ENCODE measurements at regions of chr12 and their contacts with region 1.

Region 1: DNA sequence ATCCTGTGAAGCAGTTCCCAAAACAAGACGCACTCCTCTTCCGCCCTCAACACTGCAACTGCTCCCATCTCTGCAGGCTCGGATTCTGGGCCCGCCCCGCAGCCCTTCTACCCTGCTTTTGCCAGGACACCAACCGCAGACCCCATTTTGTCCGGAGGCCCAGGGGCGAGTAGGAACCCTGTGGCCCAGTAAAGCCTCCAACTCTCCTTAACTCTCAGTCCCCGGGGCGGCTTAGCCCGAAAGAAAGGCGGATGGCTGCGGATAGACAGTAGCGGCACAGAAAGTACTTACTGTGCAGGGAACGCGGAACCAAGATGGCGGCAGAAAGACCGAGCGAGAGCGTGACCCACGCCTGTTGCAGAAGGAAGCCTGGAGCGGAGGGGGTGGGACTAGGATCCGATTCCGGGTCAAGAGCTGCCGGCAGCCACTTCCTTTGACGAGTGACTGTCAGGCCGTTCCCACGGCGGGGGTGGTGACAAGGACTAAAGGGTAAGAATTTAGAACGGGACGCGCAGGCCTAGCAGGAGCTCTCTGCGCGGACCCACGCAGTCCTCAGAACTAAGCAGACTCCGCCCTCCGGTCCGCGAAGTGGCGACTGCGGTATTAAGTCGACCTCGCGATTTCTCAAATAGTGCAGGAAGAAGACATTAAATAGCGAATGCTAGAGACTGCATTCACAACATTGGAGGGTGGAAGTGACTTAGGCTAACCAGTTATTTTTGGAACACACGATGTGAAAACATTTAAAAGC is at the start of gene NACA:
- DNase-seq: peak; percentile 96 to 97
- H3K4me3 ChIP-seq: peak within 1 kb of the TSS; percentile 61 to 78
- H3K27ac ChIP-seq: peak within 1 kb of the TSS; percentile 88 to 93
- H3K4me1 ChIP-seq: peaks cover 9 to 14% of the 10 kb centered on the region in 2 donors
- H3K27me3 ChIP-seq: no peaks in the 10 kb centered on the region
- CTCF ChIP-seq: peak in 1 of 4 experiments; percentile 33
- POLR2A ChIP-seq: peak; percentile 94
- total RNA-seq, gene NACA: 942 to 2,684 (median 1,304) TPM

Region 2: GRCh38 chr12:56636675-56637540 is 88.2 kb before region 1 on chr12:
- intact Hi-C with region 1: loop called (anchors 10 kb)
- DNase-seq: peak; percentile 100
- H3K4me3 ChIP-seq: peak overlapping the region; percentile 70 to 73
- H3K27ac ChIP-seq: peak overlapping the region; percentile 90 to 100
- H3K4me1 ChIP-seq: peaks cover 4 to 19% of the 10 kb centered on the region in 2 donors
- H3K27me3 ChIP-seq: no peaks in the 10 kb centered on the region
- CTCF ChIP-seq: peak; percentile 54 to 63 (median 60)
- POLR2A ChIP-seq: peak; percentile 14 to 98

Region 3: GRCh38 chr12:56688129-56688845 is 36.9 kb before region 1 on chr12 and contains the start of gene PTGES3:
- intact Hi-C with region 1: loop called (anchors 5 kb)
- DNase-seq: peak; percentile 98
- H3K4me3 ChIP-seq: peak within 1 kb of the TSS; percentile 93 to 98
- H3K27ac ChIP-seq: peak within 1 kb of the TSS; percentile 99 to 100
- H3K4me1 ChIP-seq: no peaks in the 10 kb centered on the region
- H3K27me3 ChIP-seq: no peaks in the 10 kb centered on the region
- CTCF ChIP-seq: peak in 2 of 4 experiments; percentile 19 to 45
- POLR2A ChIP-seq: peak; percentile 92 to 97
- total RNA-seq, gene PTGES3: 80.7 to 236 (median 141) TPM

Measured in uterus (tissue), 4 donors.